ENCODE measurements at regions of chr14 and their contacts with region 1.

Region 1: DNA sequence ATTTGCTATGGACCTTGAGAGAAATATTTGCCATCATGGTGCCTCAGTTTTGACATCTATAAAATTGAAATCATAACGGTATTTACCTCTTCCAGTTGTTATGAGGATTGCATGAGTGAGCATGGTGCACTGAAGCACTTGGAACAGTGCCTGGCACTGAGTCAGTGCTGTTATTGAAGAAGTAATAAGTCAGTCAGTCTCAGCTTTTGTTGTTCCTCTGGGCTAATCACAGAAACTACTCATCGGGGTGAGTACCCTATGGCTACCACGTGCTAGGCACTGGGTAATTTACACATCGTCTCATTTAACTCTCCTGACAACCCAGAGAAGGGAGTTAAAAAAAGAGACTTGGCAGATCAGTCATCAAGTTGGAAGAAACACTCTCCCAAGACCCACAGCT is 159.5 kb upstream of the NRXN3 start:
- DNase-seq: no peak
- ATAC-seq: no peak

Region 2: GRCh38 chr14:78673845-78674244 is 663.2 kb after region 1 on chr14:
- intact Hi-C with region 1: loop called (anchors 10 kb)
- DNase-seq: no peak
- ATAC-seq: no peak

Measured in left ventricle myocardium superior (tissue), 1 donor.